ENCODE measurements at regions of chr1 and their contacts with region 1.

Region 1: GRCh38 chr1:112501810-112502641 is 6.7 kb upstream of the WNT2B start:
- DNase-seq: peak; percentile 59 to 76 (median 75)
- ATAC-seq: peak; percentile 81 to 95 (median 86)
- H3K4me3 ChIP-seq: peak overlapping the region; percentile 51 to 58 (median 53)
- H3K27ac ChIP-seq: no peak overlapping the region
- H3K4me1 ChIP-seq: peaks cover 0 to 6% (median 0%) of the 10 kb centered on the region in 4 donors
- H3K27me3 ChIP-seq: peaks cover 0 to 9% of the 10 kb centered on the region in 2 donors
- CTCF ChIP-seq: peak; percentile 59 to 69 (median 64)
- POLR2A ChIP-seq: no peak

Region 2: DNA sequence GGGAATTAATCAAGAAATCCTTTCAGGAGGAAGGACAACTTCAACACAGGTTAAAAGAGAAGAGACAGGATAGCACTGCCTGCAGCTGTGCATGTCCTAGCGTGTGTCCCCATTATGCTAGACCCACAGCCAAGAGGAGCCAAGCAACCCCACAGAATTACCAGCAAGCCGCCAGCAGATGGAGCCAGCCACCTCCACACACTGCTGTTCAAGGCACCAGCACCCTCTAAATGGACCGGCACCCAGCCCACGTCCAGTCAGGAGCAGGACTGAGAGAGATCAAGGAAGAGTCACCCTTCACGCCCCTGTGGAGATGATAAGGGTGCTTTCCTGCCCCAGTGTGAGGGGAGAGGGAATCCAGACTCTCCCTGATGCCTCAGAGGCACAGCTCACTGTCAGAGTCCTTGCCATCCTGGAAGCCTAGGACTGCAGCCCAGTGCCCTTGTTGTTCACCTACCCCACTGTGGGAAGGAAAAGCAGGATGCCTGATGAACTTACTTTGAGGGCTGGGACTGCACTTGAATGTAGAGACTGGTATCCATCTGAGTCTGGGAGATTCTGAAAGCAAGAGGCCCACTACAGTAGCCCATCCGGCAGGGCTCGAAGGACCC is 143.1 kb before region 1 on chr1:
- intact Hi-C with region 1: no loop called
- DNase-seq: peak; percentile 61 to 74 (median 67)
- ATAC-seq: peak; percentile 86 to 89 (median 88)
- H3K4me3 ChIP-seq: no peak overlapping the region
- H3K27ac ChIP-seq: peak overlapping the region in 2 of 3 donors; percentile 36 to 37
- H3K4me1 ChIP-seq: peaks cover 0 to 10% (median 0%) of the 10 kb centered on the region in 4 donors
- H3K27me3 ChIP-seq: no peaks in the 10 kb centered on the region
- CTCF ChIP-seq: peak; percentile 69 to 80 (median 74)
- POLR2A ChIP-seq: no peak

Region 3: GRCh38 chr1:112706908-112707663 is 205.1 kb after region 1 on chr1 and contains the start of gene RHOC:
- intact Hi-C with region 1: loop called (anchors 5 to 10 kb)
- DNase-seq: peak; percentile 89 to 92 (median 90)
- ATAC-seq: peak; percentile 72 to 89 (median 86)
- H3K4me3 ChIP-seq: peak within 1 kb of the TSS; percentile 85 to 99 (median 99)
- H3K27ac ChIP-seq: peak within 1 kb of the TSS; percentile 83 to 97 (median 89)
- H3K4me1 ChIP-seq: peaks cover 0 to 27% (median 9%) of the 10 kb centered on the region in 4 donors
- H3K27me3 ChIP-seq: no peaks in the 10 kb centered on the region
- CTCF ChIP-seq: peak; percentile 90 to 96 (median 93)
- POLR2A ChIP-seq: peak; percentile 90
- total RNA-seq, gene RHOC: 47.9 to 207 (median 107) TPM

Region 4: DNA sequence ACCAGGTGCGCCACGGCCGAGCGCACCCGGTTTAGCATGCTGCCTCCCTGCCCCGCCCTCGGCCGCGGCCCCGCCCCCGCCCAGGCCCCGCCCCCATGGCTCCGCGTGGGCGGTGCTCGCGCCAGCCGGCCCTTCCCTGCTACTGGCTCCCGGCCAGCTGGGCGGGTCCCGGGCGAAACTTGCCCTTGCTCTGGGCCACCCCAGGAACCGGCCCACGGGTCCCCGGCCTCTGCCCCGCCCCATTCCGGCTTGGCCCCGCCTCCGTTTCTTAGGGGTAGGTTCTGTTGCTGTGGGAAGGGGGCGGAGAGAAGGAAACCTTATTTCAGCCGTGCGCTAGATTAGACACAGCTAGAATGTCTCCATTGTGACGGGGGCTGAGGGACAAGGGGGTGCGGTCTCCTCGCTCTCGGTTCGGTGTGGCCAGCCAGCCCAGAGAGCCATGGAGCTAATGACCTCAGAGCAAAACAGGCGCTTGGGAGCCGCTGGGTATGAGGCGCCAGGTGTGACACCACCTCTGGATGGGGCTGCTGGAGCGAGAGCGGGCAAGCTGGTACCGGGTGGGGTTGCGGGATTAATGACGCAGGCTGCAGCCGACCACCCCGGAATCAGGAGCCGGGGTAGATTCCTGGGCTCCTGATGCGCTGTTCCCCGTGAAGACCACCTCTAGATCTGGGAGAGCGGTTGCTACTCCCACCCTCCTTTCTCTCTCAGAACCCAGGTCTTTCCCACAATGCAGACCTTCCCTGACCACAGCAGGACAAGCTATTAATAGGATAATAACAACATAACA is 213.4 kb after region 1 on chr1 and contains the start of gene PPM1J:
- intact Hi-C with region 1: loop called in 1 of 2 experiments (anchors 5 kb)
- DNase-seq: peak; percentile 99 to 100 (median 100)
- ATAC-seq: peak; percentile 85 to 91 (median 87)
- H3K4me3 ChIP-seq: peak within 1 kb of the TSS; percentile 49 to 61 (median 58)
- H3K27ac ChIP-seq: peak within 1 kb of the TSS in 2 of 3 donors; percentile 48 to 55
- H3K4me1 ChIP-seq: peaks cover 0 to 25% (median 7%) of the 10 kb centered on the region in 4 donors
- H3K27me3 ChIP-seq: no peaks in the 10 kb centered on the region
- CTCF ChIP-seq: no peak
- POLR2A ChIP-seq: peak; percentile 42
- total RNA-seq, gene PPM1J: 0.15 to 1.2 (median 0.40) TPM

Measured in right lobe of liver (tissue), 6 donors.